MCF 10A (cell line): ENCODE measurements at regions of chr4 and their contacts with region 1.

Region 1: GRCh38 chr4:113394730-113395530 is 345.5 kb downstream of the ANK2 start:
- DNase-seq: peak; percentile 90
- H3K4me3 Mint-ChIP-seq: no peak overlapping the region
- H3K27ac Mint-ChIP-seq: peak overlapping the region; percentile 90
- H3K4me1 Mint-ChIP-seq: no peaks in the 10 kb centered on the region
- H3K27me3 Mint-ChIP-seq: no peaks in the 10 kb centered on the region
- CTCF ChIP-seq: peak; percentile 76

Region 2: DNA sequence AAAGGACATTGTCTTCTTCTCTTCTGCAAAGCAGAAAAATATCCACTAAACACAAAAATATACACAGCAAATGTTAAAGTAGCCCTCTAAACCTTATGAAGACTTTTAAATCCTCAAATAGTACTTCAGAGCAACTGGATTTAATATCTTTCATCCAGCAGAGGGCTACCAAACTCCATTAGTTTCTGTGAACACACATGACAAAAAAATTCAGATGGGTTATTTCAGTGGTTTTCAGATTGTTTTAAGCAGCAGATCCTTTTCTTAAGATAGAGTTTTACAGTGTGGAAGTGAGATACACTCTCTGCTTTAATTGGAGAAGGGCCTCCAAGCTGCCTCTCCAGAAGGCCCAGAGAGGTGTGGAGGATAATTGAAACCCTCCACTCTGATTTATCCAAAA is 288.8 kb before region 1 on chr4:
- CTCF ChIA-PET with region 1: no interaction called
- POLR2A ChIA-PET with region 1: no interaction called
- intact Hi-C with region 1: loop called (anchors 5 kb)
- DNase-seq: peak; percentile 32
- H3K4me3 Mint-ChIP-seq: no peak overlapping the region
- H3K27ac Mint-ChIP-seq: no peak overlapping the region
- H3K4me1 Mint-ChIP-seq: no peaks in the 10 kb centered on the region
- H3K27me3 Mint-ChIP-seq: no peaks in the 10 kb centered on the region
- CTCF ChIP-seq: peak; percentile 44

Region 3: DNA sequence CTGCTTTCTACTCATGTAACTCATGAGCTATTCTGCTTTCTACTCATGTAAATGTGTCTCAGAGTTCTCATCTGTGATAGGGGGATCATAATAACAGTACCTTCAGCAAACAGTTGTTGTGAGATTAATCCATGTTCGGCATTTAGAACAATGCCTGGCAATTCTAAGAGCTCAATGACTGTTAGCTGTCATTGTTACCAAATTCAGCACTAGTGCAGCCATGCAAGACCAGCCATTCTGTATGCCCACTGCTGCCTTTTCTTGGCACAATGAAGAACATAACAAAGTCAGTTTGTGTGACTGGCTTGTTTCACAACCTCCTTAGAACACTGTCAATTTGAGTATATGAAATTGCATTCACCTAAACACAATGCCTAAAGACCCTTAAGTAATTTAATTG is 182.3 kb before region 1 on chr4:
- CTCF ChIA-PET with region 1: no interaction called
- POLR2A ChIA-PET with region 1: no interaction called
- intact Hi-C with region 1: no loop called
- DNase-seq: no peak
- H3K4me3 Mint-ChIP-seq: no peak overlapping the region
- H3K27ac Mint-ChIP-seq: no peak overlapping the region
- H3K4me1 Mint-ChIP-seq: no peaks in the 10 kb centered on the region
- H3K27me3 Mint-ChIP-seq: no peaks in the 10 kb centered on the region
- CTCF ChIP-seq: no peak

Region 4: GRCh38 chr4:113411496-113411938 is 16.6 kb after region 1 on chr4:
- CTCF ChIA-PET with region 1: interaction called, 12 read pairs
- POLR2A ChIA-PET with region 1: interaction called, 4 read pairs
- intact Hi-C with region 1: no loop called
- DNase-seq: peak; percentile 94
- H3K4me3 Mint-ChIP-seq: no peak overlapping the region
- H3K27ac Mint-ChIP-seq: peak overlapping the region; percentile 53
- H3K4me1 Mint-ChIP-seq: peaks cover 9% of the 10 kb centered on the region
- H3K27me3 Mint-ChIP-seq: no peaks in the 10 kb centered on the region
- CTCF ChIP-seq: peak; percentile 18

Region 5: DNA sequence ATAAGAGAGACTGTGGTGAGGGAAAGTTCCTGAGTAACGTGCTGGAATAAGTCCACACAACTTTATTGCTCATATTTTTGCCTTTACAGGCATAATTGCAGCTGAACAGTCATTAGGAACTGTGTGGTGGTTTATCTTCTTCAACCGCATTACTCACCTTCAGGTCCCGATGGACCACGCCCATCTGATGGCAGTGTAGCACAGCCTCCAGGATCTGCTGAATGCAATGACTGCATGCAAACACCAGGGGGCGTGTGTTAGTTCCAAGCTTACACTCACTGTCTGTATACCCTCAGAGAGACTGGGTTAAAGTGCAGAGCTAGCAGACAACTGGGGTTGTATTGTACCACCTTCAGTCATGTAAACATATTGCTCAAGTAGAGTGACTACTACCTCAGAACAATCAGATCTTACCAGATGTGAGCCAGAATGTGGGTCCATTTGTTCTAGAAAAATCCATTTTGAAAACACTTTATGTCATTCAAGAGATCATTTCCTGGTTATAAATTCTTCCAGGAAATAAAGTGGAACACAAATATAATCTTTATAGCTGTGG is 152.6 kb after region 1 on chr4:
- CTCF ChIA-PET with region 1: interaction called, 6 read pairs
- POLR2A ChIA-PET with region 1: interaction called, 4 read pairs
- intact Hi-C with region 1: loop called (anchors 1 kb)
- DNase-seq: peak; percentile 97
- H3K4me3 Mint-ChIP-seq: no peak overlapping the region
- H3K27ac Mint-ChIP-seq: no peak overlapping the region
- H3K4me1 Mint-ChIP-seq: peaks cover 8% of the 10 kb centered on the region
- H3K27me3 Mint-ChIP-seq: no peaks in the 10 kb centered on the region
- CTCF ChIP-seq: peak; percentile 93

Region 6: DNA sequence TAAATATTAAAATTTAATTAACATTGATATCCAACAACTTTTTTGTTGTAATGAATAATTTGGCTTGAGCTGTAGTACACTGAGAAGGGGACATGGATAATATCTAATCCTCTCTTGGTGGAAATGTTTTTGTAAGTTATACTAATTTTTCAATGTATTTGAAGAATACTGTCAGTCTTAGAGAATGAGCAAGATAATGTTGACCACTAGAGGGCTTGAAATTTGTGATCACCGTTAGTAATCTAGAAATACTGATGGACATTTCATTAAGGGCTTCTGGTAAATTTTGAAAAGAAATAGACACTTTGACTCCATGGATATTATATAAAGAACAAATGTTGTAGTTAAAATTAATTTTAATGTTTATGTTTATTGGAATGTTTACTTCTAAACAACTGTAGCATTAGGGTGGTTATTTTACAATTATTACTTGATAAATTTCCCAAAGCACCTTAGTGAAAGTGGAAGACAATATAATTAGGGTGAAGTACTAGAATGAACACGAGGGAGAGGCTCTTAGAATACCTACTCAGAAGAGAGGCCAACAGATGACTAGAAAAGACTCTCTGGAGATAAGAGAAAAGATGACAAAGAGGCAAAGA is 386.6 kb after region 1 on chr4:
- CTCF ChIA-PET with region 1: interaction called, 7 read pairs
- POLR2A ChIA-PET with region 1: interaction called, 3 read pairs
- intact Hi-C with region 1: loop called (anchors 1 kb)
- DNase-seq: peak; percentile 53
- H3K4me3 Mint-ChIP-seq: no peak overlapping the region
- H3K27ac Mint-ChIP-seq: no peak overlapping the region
- H3K4me1 Mint-ChIP-seq: peaks cover 20% of the 10 kb centered on the region
- H3K27me3 Mint-ChIP-seq: no peaks in the 10 kb centered on the region
- CTCF ChIP-seq: peak; percentile 38

Region 7: GRCh38 chr4:113979148-113979904 is 584.4 kb after region 1 on chr4 and contains the start of gene ARSJ:
- CTCF ChIA-PET with region 1: interaction called, 4 read pairs
- POLR2A ChIA-PET with region 1: interaction called, 4 read pairs
- intact Hi-C with region 1: loop called (anchors 5 kb)
- DNase-seq: peak; percentile 87
- H3K4me3 Mint-ChIP-seq: peak within 1 kb of the TSS; percentile 94
- H3K27ac Mint-ChIP-seq: peak within 1 kb of the TSS; percentile 95
- H3K4me1 Mint-ChIP-seq: peaks cover 19% of the 10 kb centered on the region
- H3K27me3 Mint-ChIP-seq: no peaks in the 10 kb centered on the region
- CTCF ChIP-seq: peak; percentile 34
- total RNA-seq, gene ARSJ: 36.2 and 50.7 TPM in 2 replicates

Region 8: GRCh38 chr4:114694770-114695169 is 1299.8 kb after region 1 on chr4:
- CTCF ChIA-PET with region 1: no interaction called
- POLR2A ChIA-PET with region 1: no interaction called
- intact Hi-C with region 1: loop called (anchors 10 kb)
- DNase-seq: peak; percentile 49
- H3K4me3 Mint-ChIP-seq: no peak overlapping the region
- H3K27ac Mint-ChIP-seq: no peak overlapping the region
- H3K4me1 Mint-ChIP-seq: no peaks in the 10 kb centered on the region
- H3K27me3 Mint-ChIP-seq: peaks cover 25% of the 10 kb centered on the region
- CTCF ChIP-seq: peak; percentile 55